Motor neuron (in vitro differentiated cells): ENCODE measurements at regions of chr18 and their contacts with region 1.

Region 1: DNA sequence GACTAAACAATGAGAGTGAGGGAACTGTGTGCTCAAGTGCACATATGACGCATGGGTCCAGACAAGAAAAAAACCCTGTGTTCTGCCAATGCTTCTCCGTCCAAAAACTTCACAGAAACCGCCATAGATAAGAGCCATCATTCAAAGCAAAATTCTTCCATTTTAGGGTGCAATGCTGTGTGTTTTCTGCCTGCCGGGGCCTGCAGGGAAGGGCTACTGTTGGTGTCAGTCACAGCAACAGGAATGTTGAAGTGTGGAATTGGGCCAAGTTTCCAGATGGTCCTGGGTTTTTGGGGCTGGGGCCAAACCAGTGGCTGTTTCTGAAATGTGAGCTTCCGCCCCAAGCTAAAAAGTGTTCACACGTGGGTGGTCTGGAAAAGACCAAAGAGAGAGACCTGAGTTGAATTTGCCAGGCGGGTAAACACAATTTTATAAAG is 677 bp upstream of the MC2R start:
- ATAC-seq: peak in 1 of 8 experiments; percentile 26
- H3K4me3 ChIP-seq: no peak overlapping the region
- H3K27ac ChIP-seq: no peak overlapping the region
- H3K4me1 ChIP-seq: no peaks in the 10 kb centered on the region

Region 2: GRCh38 chr18:13823707-13824395 is 92.2 kb before region 1 on chr18 and contains the start of gene MC5R:
- in situ Hi-C with region 1: loop called in 1 of 9 experiments (anchors 25 kb)
- ATAC-seq: peak; percentile 88 to 99 (median 96)
- H3K4me3 ChIP-seq: peak within 1 kb of the TSS; percentile 11 to 40 (median 28)
- H3K27ac ChIP-seq: no peak within 1 kb of the TSS
- H3K4me1 ChIP-seq: no peaks in the 10 kb centered on the region
- total RNA-seq, gene MC5R: 0.13 to 0.38 TPM in 2 of 8 experiments, not detected in the others

Region 3: DNA sequence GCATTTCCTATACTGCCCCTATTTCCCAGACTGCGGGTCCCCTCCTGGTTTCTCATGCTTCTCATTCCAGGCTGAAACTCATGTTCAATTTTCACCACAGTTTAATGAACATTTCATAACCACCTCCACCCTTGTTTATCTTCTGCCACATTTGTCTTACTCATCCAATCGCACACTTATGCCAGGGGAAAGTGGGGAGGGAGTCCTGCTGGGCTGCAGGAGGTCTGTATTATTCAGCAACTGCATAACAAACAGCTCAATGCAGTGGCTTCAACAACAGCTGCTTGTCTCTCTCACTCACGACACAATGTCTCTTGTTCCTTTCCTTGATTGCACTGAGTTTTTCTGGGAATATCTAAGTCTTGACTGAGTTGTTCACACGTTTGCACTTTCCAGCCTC is 110.2 kb after region 1 on chr18:
- in situ Hi-C with region 1: no loop called
- ATAC-seq: peak in 2 of 8 experiments; percentile 20 to 47
- H3K4me3 ChIP-seq: no peak overlapping the region
- H3K27ac ChIP-seq: no peak overlapping the region
- H3K4me1 ChIP-seq: no peaks in the 10 kb centered on the region